ENCODE measurements at regions of chr1 and their contacts with region 1.

Region 1: GRCh38 chr1:110460253-110461220 is 9.6 kb downstream of the PROK1 start:
- DNase-seq: peak; percentile 77
- H3K4me3 Mint-ChIP-seq: no peak overlapping the region
- H3K27ac Mint-ChIP-seq: no peak overlapping the region
- H3K4me1 Mint-ChIP-seq: no peaks in the 10 kb centered on the region
- H3K27me3 Mint-ChIP-seq: no peaks in the 10 kb centered on the region

Region 2: GRCh38 chr1:110024613-110025012 is 435.9 kb before region 1 on chr1:
- intact Hi-C with region 1: loop called (anchors 5 kb)
- DNase-seq: no peak
- H3K4me3 Mint-ChIP-seq: no peak overlapping the region
- H3K27ac Mint-ChIP-seq: no peak overlapping the region
- H3K4me1 Mint-ChIP-seq: no peaks in the 10 kb centered on the region
- H3K27me3 Mint-ChIP-seq: no peaks in the 10 kb centered on the region

Region 3: GRCh38 chr1:110209715-110210603 is 250.6 kb before region 1 on chr1 and contains the start of gene KCNC4:
- intact Hi-C with region 1: loop called (anchors 1 kb)
- DNase-seq: peak; percentile 88
- H3K4me3 Mint-ChIP-seq: peak within 1 kb of the TSS; percentile 88
- H3K27ac Mint-ChIP-seq: peak within 1 kb of the TSS; percentile 87
- H3K4me1 Mint-ChIP-seq: peaks cover 40% of the 10 kb centered on the region
- H3K27me3 Mint-ChIP-seq: peaks cover 13% of the 10 kb centered on the region
- total RNA-seq, gene KCNC4: 11.8 and 14.3 TPM in 2 replicates

Region 4: GRCh38 chr1:110407260-110408210 is 53.0 kb before region 1 on chr1 and contains the start of gene LAMTOR5:
- intact Hi-C with region 1: loop called (anchors 1 kb)
- DNase-seq: peak; percentile 90
- H3K4me3 Mint-ChIP-seq: peak within 1 kb of the TSS; percentile 100
- H3K27ac Mint-ChIP-seq: peak within 1 kb of the TSS; percentile 100
- H3K4me1 Mint-ChIP-seq: peaks cover 22% of the 10 kb centered on the region
- H3K27me3 Mint-ChIP-seq: no peaks in the 10 kb centered on the region
- total RNA-seq, gene LAMTOR5: 163 and 184 TPM in 2 replicates

Region 5: GRCh38 chr1:110495926-110496600 is 35.5 kb after region 1 on chr1:
- intact Hi-C with region 1: loop called (anchors 1 kb)
- DNase-seq: peak; percentile 65
- H3K4me3 Mint-ChIP-seq: no peak overlapping the region
- H3K27ac Mint-ChIP-seq: no peak overlapping the region
- H3K4me1 Mint-ChIP-seq: no peaks in the 10 kb centered on the region
- H3K27me3 Mint-ChIP-seq: peaks cover 3% of the 10 kb centered on the region